ENCODE measurements at regions of chr10 and their contacts with region 1.

Region 1: GRCh38 chr10:13776861-13777311 is 190.1 kb downstream of the PRPF18 start:
- DNase-seq: peak; percentile 61
- H3K4me3 ChIP-seq: no peak overlapping the region
- H3K27ac ChIP-seq: peak overlapping the region; percentile 65
- H3K4me1 ChIP-seq: peaks cover 45% of the 10 kb centered on the region
- H3K27me3 ChIP-seq: no peaks in the 10 kb centered on the region
- CTCF ChIP-seq: no peak

Region 2: DNA sequence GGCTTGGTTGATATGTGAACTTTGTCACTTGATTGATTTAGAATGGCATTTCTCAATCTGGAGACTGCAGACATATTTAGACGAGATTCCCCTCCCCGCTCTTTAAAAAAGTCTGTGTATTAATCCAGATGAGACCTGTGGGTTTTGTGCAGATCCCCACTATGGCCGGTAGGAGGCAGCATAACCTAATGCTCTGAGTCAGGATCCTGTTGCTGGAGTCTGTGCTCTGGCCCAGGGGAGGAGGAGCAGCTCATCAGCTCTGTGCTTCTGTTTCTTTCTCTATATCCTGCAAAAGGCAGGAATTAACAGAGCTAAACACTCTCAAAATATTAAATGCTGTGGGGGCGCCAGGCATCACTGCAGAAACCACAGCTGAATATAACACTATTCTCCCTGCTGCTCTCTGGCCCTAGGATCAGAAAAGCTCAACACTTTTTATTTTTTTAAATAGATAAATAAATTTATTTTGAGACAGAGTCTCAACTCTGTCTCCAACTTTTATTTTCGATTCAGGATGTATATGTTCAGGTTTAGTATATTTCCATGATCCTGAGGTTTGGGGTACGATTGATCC is 404.9 kb before region 1 on chr10:
- CTCF ChIA-PET with region 1: no interaction called
- dilution Hi-C with region 1: no loop called
- in situ Hi-C with region 1: loop called in 1 of 2 experiments (anchors 10 kb)
- intact Hi-C with region 1: loop called (anchors 1 kb)
- DNase-seq: peak; percentile 73
- H3K4me3 ChIP-seq: no peak overlapping the region
- H3K27ac ChIP-seq: no peak overlapping the region
- H3K4me1 ChIP-seq: no peaks in the 10 kb centered on the region
- H3K27me3 ChIP-seq: no peaks in the 10 kb centered on the region
- CTCF ChIP-seq: peak; percentile 99

Region 3: DNA sequence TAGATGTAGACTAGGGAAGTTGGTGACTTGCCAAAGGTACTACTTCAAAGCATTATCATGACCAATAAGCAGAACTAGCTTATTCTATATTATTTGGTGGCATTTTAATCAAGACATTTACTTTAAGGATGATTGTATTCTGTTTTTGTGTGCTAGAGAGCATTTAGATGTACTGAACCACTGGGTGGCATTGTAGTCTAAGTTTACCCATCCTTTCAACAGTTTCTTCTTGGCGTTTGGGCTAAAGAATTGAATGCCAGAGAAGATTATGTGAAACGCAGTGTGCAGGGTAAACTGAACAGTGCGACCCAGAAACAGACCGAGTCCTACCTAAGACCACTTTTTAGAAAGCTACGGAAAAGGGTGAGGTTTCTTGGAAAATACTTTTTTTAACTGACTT is 163.4 kb before region 1 on chr10:
- CTCF ChIA-PET with region 1: no interaction called
- dilution Hi-C with region 1: no loop called
- in situ Hi-C with region 1: no loop called
- intact Hi-C with region 1: loop called (anchors 1 kb)
- DNase-seq: no peak
- H3K4me3 ChIP-seq: no peak overlapping the region
- H3K27ac ChIP-seq: no peak overlapping the region
- H3K4me1 ChIP-seq: no peaks in the 10 kb centered on the region
- H3K27me3 ChIP-seq: no peaks in the 10 kb centered on the region
- CTCF ChIP-seq: peak; percentile 16 to 39

Region 4: DNA sequence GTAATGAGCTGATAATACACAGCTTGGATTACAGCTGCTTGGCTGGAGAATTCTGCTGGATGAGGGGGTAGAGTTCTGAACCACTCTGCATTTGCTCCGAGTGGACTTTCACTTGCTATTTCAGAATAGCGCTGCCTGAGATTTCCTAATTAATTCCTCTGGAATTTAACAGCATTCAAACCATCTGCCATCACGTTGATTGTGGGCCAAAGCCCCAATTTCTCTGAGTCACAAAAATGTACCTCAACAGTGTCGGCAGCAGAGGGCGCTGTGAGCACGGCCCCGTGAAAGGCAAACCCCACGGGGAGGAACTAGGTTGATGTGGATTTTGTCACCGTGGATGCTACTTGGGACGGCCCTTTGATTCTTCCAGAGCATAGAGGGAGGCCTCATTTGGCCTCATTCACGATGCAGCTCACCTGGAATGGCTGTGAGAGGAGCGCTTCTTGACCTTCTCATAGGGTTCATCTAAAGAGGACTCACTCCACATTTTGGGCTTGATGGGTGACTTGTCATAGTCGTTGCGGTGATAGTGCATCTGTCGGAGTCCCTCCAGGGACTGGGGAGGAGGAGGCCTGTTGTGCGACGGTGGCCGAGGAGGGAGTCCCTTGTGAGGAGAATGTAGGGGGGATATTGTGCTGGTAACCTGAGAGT is 116.9 kb before region 1 on chr10:
- CTCF ChIA-PET with region 1: no interaction called
- dilution Hi-C with region 1: loop called (anchors 5 kb)
- in situ Hi-C with region 1: no loop called
- intact Hi-C with region 1: loop called (anchors 1 kb)
- DNase-seq: peak; percentile 65
- H3K4me3 ChIP-seq: no peak overlapping the region
- H3K27ac ChIP-seq: peak overlapping the region; percentile 73
- H3K4me1 ChIP-seq: peaks cover 22% of the 10 kb centered on the region
- H3K27me3 ChIP-seq: no peaks in the 10 kb centered on the region
- CTCF ChIP-seq: peak; percentile 87 to 93

Region 5: DNA sequence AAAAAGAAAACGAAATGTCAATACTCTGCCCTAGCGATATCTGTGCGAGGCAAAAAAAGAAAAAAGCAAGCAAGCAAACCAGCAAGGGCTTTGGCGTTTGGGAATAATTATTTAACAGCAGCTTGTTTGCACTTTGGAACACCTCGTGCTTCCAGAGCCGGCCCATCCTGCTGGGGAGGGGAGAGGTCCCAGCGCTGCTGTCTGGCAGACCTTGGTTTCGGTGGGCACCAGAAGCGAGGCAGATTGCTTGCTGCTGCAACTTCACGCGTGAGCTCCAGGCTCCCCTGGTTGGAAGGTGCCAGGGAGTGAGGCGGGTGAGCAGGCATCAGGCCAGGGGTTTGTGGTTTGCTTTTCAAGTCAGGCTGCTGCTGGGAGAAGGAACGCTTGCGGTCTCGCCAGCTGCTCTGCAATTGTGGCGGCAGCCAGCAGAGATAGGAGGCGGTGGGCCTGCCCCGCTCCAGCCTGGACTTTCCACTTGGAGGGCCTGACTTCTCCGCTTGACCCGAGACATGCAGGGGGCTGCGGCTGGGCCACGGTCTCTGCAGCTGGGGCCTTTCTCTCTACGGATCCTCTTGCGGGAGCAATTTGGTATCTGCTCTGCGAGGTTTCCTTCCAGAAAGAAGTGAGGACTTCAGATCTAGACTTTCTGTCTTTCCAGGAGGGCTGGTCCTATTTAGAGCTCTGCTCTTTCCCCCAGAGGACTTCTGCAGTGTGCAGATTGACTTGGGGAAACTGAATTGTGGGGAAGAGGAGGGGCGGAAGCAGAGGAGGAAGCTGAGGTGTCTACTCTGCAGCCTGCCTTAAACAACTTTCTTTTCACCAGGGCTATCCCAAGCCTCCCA is 58.7 kb before region 1 on chr10:
- CTCF ChIA-PET with region 1: interaction called, 32 read pairs
- dilution Hi-C with region 1: no loop called
- in situ Hi-C with region 1: loop called in 1 of 2 experiments (anchors 5 kb)
- intact Hi-C with region 1: no loop called
- DNase-seq: peak; percentile 82
- H3K4me3 ChIP-seq: peak overlapping the region; percentile 6 to 52 (median 39)
- H3K27ac ChIP-seq: no peak overlapping the region
- H3K4me1 ChIP-seq: peaks cover 19% of the 10 kb centered on the region
- H3K27me3 ChIP-seq: no peaks in the 10 kb centered on the region
- CTCF ChIP-seq: no peak

Measured in mammary epithelial cell (primary cell).